ENCODE measurements at regions of chr6 and their contacts with region 1.

Region 1: GRCh38 chr6:89970609-89971337 is 76.5 kb downstream of the GJA10 start:
- DNase-seq: no peak
- ATAC-seq: peak; percentile 63
- H3K4me3 ChIP-seq: no peak overlapping the region
- H3K27ac ChIP-seq: no peak overlapping the region
- H3K4me1 ChIP-seq: no peaks in the 10 kb centered on the region
- H3K27me3 ChIP-seq: no peaks in the 10 kb centered on the region

Region 2: DNA sequence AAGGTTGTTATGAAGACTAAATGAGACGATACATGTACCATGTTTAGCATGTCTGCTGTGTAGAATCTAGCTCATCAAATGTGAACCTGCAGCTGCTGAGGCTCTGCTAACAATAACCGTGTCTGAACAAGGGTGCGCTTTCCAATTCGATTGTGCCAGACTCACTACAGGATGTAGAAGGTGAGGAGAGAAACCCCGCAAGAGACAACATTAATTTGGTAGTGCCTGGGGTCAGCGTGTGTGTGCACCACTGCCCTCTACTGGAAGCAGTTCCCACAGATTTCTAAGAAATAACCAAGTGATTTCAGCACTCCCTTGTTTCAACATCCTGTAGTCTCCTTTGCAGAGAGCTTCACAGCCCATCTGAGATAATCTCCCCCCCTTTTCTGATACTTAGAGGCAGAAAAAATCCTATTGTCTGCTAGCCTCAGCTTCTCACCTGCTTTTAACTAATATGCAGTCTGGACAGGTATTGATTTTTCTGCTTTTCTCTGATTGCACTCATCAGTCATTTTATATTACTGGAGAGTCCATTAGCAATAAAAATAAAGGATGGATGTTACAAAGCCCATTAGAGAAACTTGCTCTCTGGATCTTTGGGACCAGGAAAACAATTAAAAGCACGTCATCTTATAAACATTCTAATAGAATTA is 422.6 kb after region 1 on chr6:
- intact Hi-C with region 1: loop called (anchors 2 kb)
- DNase-seq: no peak
- ATAC-seq: peak; percentile 72
- H3K4me3 ChIP-seq: no peak overlapping the region
- H3K27ac ChIP-seq: no peak overlapping the region
- H3K4me1 ChIP-seq: peaks cover 0 to 2% of the 10 kb centered on the region in 2 donors
- H3K27me3 ChIP-seq: no peaks in the 10 kb centered on the region

Measured in aorta (tissue), 5 donors.